Mammary epithelial cell (primary cell): ENCODE measurements at regions of chr2 and their contacts with region 1.

Region 1: DNA sequence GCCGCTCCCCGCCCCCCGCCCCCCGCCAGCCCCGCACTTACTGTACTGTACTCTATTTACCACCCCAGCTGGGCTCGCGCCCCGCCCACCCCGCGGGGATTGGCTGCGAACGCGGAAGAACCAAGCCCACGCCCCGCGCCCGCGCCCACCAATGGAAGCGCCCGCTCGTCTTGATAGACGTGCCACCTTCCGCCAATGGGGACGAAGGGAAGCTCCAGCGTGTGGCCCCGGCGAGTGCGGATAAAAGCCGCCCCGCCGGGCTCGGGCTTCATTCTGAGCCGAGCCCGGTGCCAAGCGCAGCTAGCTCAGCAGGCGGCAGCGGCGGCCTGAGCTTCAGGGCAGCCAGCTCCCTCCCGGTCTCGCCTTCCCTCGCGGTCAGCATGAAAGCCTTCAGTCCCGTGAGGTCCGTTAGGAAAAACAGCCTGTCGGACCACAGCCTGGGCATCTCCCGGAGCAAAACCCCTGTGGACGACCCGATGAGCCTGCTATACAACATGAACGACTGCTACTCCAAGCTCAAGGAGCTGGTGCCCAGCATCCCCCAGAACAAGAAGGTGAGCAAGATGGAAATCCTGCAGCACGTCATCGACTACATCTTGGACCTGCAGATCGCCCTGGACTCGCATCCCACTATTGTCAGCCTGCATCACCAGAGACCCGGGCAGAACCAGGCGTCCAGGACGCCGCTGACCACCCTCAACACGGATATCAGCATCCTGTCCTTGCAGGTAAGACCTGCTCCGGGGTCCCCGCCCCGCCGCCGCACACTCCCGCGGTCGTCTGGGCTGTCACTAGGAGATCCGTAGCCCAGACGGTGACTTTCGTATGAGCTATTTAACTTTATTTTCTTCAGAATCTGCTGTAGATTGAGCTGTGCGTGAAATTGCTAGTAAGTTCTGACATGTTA is at the start of gene ID2:
- DNase-seq: peak; percentile 98
- H3K4me3 ChIP-seq: peak within 1 kb of the TSS; percentile 66 to 81 (median 77)
- H3K27ac ChIP-seq: peak within 1 kb of the TSS; percentile 34
- H3K4me1 ChIP-seq: peaks cover 26% of the 10 kb centered on the region
- H3K27me3 ChIP-seq: no peaks in the 10 kb centered on the region
- CTCF ChIP-seq: no peak
- total RNA-seq, gene ID2: 4.4 to 8.7 TPM

Region 2: GRCh38 chr2:7097348-7097895 is 1584.6 kb before region 1 on chr2:
- CTCF ChIA-PET with region 1: interaction called, 7 read pairs
- dilution Hi-C with region 1: no loop called
- in situ Hi-C with region 1: loop called in 1 of 2 experiments (anchors 25 kb)
- intact Hi-C with region 1: loop called (anchors 1 kb)
- DNase-seq: peak; percentile 42
- H3K4me3 ChIP-seq: no peak overlapping the region
- H3K27ac ChIP-seq: no peak overlapping the region
- H3K4me1 ChIP-seq: peaks cover 3% of the 10 kb centered on the region
- H3K27me3 ChIP-seq: no peaks in the 10 kb centered on the region
- CTCF ChIP-seq: peak; percentile 94 to 97

Region 3: GRCh38 chr2:7127156-7127555 is 1554.9 kb before region 1 on chr2:
- CTCF ChIA-PET with region 1: no interaction called
- dilution Hi-C with region 1: no loop called
- in situ Hi-C with region 1: loop called (anchors 10 to 25 kb)
- intact Hi-C with region 1: no loop called
- DNase-seq: no peak
- H3K4me3 ChIP-seq: no peak overlapping the region
- H3K27ac ChIP-seq: no peak overlapping the region
- H3K4me1 ChIP-seq: no peaks in the 10 kb centered on the region
- H3K27me3 ChIP-seq: no peaks in the 10 kb centered on the region
- CTCF ChIP-seq: no peak

Region 4: GRCh38 chr2:7427293-7428060 is 1254.6 kb before region 1 on chr2:
- CTCF ChIA-PET with region 1: no interaction called
- dilution Hi-C with region 1: no loop called
- in situ Hi-C with region 1: loop called (anchors 5 to 10 kb)
- intact Hi-C with region 1: loop called (anchors 1 kb)
- DNase-seq: peak; percentile 37
- H3K4me3 ChIP-seq: no peak overlapping the region
- H3K27ac ChIP-seq: no peak overlapping the region
- H3K4me1 ChIP-seq: peaks cover 8% of the 10 kb centered on the region
- H3K27me3 ChIP-seq: peaks cover 2% of the 10 kb centered on the region
- CTCF ChIP-seq: peak; percentile 61 to 66

Region 5: GRCh38 chr2:7845332-7845731 is 836.7 kb before region 1 on chr2:
- CTCF ChIA-PET with region 1: no interaction called
- dilution Hi-C with region 1: no loop called
- in situ Hi-C with region 1: no loop called
- intact Hi-C with region 1: loop called (anchors 10 kb)
- DNase-seq: peak; percentile 54
- H3K4me3 ChIP-seq: no peak overlapping the region
- H3K27ac ChIP-seq: peak overlapping the region; percentile 56
- H3K4me1 ChIP-seq: peaks cover 42% of the 10 kb centered on the region
- H3K27me3 ChIP-seq: no peaks in the 10 kb centered on the region
- CTCF ChIP-seq: no peak

Region 6: GRCh38 chr2:8148260-8149008 is 533.6 kb before region 1 on chr2:
- CTCF ChIA-PET with region 1: no interaction called
- dilution Hi-C with region 1: no loop called
- in situ Hi-C with region 1: no loop called
- intact Hi-C with region 1: loop called (anchors 10 kb)
- DNase-seq: peak; percentile 63
- H3K4me3 ChIP-seq: no peak overlapping the region
- H3K27ac ChIP-seq: no peak overlapping the region
- H3K4me1 ChIP-seq: peaks cover 12% of the 10 kb centered on the region
- H3K27me3 ChIP-seq: no peaks in the 10 kb centered on the region
- CTCF ChIP-seq: no peak

Region 7: DNA sequence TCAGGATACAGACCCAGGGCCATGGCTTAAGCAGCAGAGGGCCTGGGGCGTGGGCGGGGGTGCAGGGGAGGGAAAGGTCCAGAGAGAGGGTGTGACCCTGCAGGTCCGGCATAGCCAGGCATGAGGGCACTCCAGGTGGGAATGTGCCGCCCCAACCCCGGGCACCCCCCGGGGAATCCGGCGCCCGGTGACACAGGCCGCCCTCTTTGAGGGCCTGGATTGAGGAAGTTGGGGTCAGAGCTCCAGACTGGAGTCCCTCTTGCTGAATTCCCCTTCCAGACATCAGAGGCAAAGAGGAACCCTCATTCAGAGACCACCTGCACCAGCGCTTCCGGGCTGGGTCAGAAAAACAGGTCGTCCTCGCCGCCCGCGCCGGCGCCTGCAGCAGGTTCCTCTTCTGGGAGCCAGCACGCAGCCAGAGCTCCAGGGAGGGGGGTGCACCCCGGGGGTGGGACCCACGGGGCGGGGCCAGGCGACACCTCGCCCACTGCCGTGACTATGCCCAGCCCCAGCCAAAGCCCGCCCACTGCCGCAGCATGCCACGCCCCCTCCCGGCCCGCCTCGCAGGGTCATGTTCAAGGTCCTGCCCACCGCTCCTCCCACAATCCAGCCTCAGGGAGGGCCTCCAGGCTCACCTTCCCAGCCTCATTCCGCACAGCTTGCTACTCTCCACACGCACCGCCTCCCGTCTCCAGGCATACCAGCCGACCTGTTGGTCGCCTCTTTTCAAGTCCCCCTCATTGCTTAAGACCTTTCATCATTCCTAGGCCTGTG is 98.5 kb before region 1 on chr2:
- CTCF ChIA-PET with region 1: no interaction called
- dilution Hi-C with region 1: no loop called
- in situ Hi-C with region 1: no loop called
- intact Hi-C with region 1: no loop called
- DNase-seq: no peak
- H3K4me3 ChIP-seq: no peak overlapping the region
- H3K27ac ChIP-seq: no peak overlapping the region
- H3K4me1 ChIP-seq: no peaks in the 10 kb centered on the region
- H3K27me3 ChIP-seq: no peaks in the 10 kb centered on the region
- CTCF ChIP-seq: no peak

Region 8: GRCh38 chr2:8669157-8669817 is 12.8 kb before region 1 on chr2:
- CTCF ChIA-PET with region 1: no interaction called
- dilution Hi-C with region 1: no loop called
- in situ Hi-C with region 1: no loop called
- intact Hi-C with region 1: no loop called
- DNase-seq: no peak
- H3K4me3 ChIP-seq: no peak overlapping the region
- H3K27ac ChIP-seq: no peak overlapping the region
- H3K4me1 ChIP-seq: no peaks in the 10 kb centered on the region
- H3K27me3 ChIP-seq: no peaks in the 10 kb centered on the region
- CTCF ChIP-seq: no peak